Right ventricle myocardium inferior (tissue), 1 donor: ENCODE measurements at regions of chr2 and their contacts with region 1.

Region 1: GRCh38 chr2:71460595-71461303 is 7.4 kb downstream of the DYSF start:
- DNase-seq: peak; percentile 76
- ATAC-seq: no peak

Region 2: GRCh38 chr2:71505086-71505769 is 44.5 kb after region 1 on chr2:
- intact Hi-C with region 1: loop called (anchors 1 kb)
- DNase-seq: no peak
- ATAC-seq: peak; percentile 1